ENCODE measurements at regions of chr14 and their contacts with region 1.

Region 1: DNA sequence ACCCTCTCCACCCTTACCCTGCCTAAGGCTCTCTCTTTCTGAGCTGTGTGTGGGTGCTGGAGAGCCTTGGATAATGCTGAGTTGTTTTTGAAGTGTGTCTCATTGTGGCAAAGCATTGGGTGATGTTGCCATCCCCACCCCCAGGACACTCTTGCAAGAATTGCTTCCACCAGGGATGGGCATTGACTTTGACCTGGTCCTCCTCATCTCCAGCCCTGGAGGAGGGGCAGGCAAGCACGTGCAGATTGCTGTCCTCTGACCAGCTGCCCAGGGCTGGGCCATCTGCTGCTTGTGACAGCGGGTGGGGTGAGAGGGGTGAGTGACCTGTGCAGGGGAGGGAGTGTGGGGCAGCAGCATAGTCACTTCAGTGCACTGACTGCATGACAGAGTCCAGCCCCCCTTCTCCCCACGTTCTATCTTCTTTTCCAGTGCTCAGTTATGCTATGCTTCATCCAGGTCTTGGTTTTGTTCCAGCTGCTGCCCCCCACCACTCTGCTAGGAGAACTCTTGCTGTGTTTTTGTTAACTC is 26.2 kb downstream of the SUSD6 start:
- DNase-seq: no peak
- ATAC-seq: no peak
- H3K4me3 Mint-ChIP-seq: peak overlapping the region; percentile 72
- H3K27ac Mint-ChIP-seq: peak overlapping the region; percentile 92
- H3K4me1 Mint-ChIP-seq: peaks cover 95% of the 10 kb centered on the region
- H3K27me3 Mint-ChIP-seq: no peaks in the 10 kb centered on the region
- CTCF ChIP-seq: no peak

Region 2: DNA sequence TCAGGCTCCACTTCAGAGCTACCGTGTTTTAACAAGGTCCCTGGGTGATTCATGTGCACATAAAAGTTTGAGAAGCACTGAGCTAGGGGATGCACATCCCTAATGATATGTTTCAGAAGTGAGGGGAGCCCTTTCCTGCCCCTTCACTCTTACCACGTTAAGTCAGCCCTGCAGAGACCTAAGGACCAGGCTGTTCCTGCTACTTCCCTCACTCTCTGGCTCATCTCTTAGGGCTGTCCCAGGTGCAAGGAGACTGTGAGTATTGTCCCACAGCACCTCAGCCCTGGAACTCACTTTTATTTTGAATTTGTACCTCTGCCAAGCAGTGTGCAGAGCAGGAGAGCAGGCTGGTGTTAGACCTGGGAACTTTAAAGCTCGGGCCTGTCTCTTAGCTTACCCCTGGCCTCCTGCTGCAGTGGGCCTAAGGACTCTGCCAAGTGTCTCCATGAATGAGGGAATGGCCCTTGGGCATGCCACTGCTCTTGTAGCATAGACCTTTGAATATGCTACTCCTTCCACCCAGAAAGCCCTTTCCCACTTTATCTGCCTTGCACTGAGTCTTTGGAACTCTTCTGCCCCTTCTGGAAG is 37.2 kb before region 1 on chr14:
- CTCF ChIA-PET with region 1: no interaction called
- POLR2A ChIA-PET with region 1: interaction called, 5 read pairs
- intact Hi-C with region 1: loop called (anchors 5 kb)
- DNase-seq: no peak
- ATAC-seq: no peak
- H3K4me3 Mint-ChIP-seq: no peak overlapping the region
- H3K27ac Mint-ChIP-seq: no peak overlapping the region
- H3K4me1 Mint-ChIP-seq: peaks cover 3% of the 10 kb centered on the region
- H3K27me3 Mint-ChIP-seq: no peaks in the 10 kb centered on the region
- CTCF ChIP-seq: no peak

Region 3: GRCh38 chr14:69620111-69620611 is 17.4 kb before region 1 on chr14:
- CTCF ChIA-PET with region 1: interaction called, 4 read pairs
- POLR2A ChIA-PET with region 1: interaction called, 15 read pairs
- intact Hi-C with region 1: loop called (anchors 1 kb)
- DNase-seq: no peak
- ATAC-seq: peak; percentile 20
- H3K4me3 Mint-ChIP-seq: peak overlapping the region; percentile 39
- H3K27ac Mint-ChIP-seq: peak overlapping the region; percentile 99
- H3K4me1 Mint-ChIP-seq: peaks cover 96% of the 10 kb centered on the region
- H3K27me3 Mint-ChIP-seq: no peaks in the 10 kb centered on the region
- CTCF ChIP-seq: no peak

Region 4: GRCh38 chr14:69625299-69626131 is 12.1 kb before region 1 on chr14:
- CTCF ChIA-PET with region 1: interaction called, 3 read pairs
- POLR2A ChIA-PET with region 1: interaction called, 10 read pairs
- intact Hi-C with region 1: loop called (anchors 1 kb)
- DNase-seq: no peak
- ATAC-seq: peak; percentile 88
- H3K4me3 Mint-ChIP-seq: peak overlapping the region; percentile 74
- H3K27ac Mint-ChIP-seq: peak overlapping the region; percentile 83
- H3K4me1 Mint-ChIP-seq: peaks cover 93% of the 10 kb centered on the region
- H3K27me3 Mint-ChIP-seq: no peaks in the 10 kb centered on the region
- CTCF ChIP-seq: no peak

Region 5: DNA sequence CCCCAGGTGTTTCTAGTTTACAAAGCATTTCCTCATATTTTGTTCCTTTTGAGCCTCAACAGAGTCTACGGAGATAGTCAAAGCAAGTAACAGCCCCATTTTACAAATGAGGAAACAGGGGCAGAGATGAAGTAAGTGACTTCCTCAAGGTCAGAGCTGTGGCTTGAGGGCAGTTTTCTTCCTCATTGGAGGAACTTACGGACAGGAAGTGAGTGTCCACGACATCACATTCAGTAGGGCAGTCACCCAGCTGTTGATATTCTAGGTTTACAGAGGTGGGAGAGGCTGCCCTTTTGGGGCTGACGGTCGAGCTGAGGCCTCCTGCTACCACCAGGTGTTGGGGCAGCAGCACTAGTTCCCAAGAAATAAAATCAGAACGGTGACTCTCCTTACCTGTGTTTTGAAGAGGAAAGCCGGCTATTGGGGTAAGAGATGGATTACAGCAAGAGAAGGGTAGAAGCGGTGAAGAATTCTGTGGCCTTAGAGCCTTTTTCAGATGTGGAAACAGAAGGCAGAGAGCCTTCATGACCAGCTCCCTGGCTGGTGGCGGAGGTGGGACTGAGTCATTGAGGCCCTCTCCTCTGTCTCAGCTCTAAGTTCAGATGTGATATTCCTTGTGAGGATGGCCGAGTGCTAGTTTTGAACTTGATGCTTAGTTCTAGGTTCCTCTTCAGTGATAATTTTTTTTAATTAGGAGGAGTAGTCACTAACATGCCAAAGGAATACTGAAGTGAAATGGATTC is 15.5 kb after region 1 on chr14:
- CTCF ChIA-PET with region 1: interaction called, 5 read pairs
- POLR2A ChIA-PET with region 1: interaction called, 6 read pairs
- intact Hi-C with region 1: loop called (anchors 1 kb)
- DNase-seq: no peak
- ATAC-seq: peak; percentile 74
- H3K4me3 Mint-ChIP-seq: peak overlapping the region; percentile 61
- H3K27ac Mint-ChIP-seq: peak overlapping the region; percentile 88
- H3K4me1 Mint-ChIP-seq: peaks cover 95% of the 10 kb centered on the region
- H3K27me3 Mint-ChIP-seq: no peaks in the 10 kb centered on the region
- CTCF ChIP-seq: no peak

Measured in activated B cell treated with CpG ODN at 0.5 μM for 24 hours (primary cell).